Activated naive CD8-positive, alpha-beta T cell treated with anti-CD3 and anti-CD28 coated beads, Interleukin-2, amount 10 ng/mL, durations not matched to agents 7 days and 5 days (primary cell): ENCODE measurements at regions of chr19 and their contacts with region 1.

Region 1: DNA sequence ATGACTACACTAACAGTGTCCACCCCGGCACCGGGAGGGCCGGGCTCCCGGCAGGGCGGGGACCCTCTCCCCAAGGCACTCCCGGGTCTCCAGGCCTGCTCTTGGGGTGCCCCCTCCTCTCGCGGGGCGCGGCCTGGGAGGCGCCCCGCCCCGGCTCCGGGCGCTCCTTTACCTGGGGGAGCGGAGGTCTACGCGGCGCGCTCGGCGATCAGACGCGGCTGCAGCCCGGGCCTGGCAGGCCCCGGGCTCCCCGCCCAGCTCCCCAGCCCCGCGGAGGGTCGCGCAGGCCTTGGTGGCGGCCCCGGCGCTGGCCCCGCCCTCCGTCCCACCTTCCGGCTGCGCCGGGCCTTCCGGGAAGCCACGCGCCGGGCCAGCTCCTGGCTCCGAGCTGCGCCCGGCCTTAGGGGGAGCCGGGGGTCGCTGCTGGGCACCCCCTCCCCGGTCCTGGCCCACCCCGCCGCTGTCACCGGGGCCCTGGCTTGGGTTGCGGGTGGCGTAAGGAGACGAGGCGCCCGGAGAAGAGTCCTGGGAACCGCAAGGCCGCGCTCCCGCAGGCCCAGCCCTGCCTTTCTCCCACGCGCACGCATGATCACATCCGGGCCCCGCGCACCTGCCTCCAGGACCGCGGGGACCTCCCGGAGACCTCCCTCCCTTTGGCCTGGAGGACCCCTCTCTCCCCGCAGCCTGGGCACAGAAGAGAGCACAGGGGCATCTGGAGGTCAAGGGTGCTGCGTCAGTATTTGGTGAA is at the start of gene C19orf12:
- DNase-seq: peak; percentile 86
- ATAC-seq: peak; percentile 69
- H3K4me3 Mint-ChIP-seq: peak within 1 kb of the TSS; percentile 93
- H3K27ac Mint-ChIP-seq: peak within 1 kb of the TSS; percentile 98
- H3K4me1 Mint-ChIP-seq: peaks cover 47% of the 10 kb centered on the region
- H3K27me3 Mint-ChIP-seq: peaks cover under 1% of the 10 kb centered on the region
- total RNA-seq, gene C19orf12: 31.8 to 38.2 TPM

Region 2: GRCh38 chr19:29671393-29672160 is 43.5 kb before region 1 on chr19:
- POLR2A ChIA-PET with region 1: interaction called, 58 read pairs
- DNase-seq: peak; percentile 76
- ATAC-seq: peak; percentile 69
- H3K4me3 Mint-ChIP-seq: peak overlapping the region; percentile 78
- H3K27ac Mint-ChIP-seq: peak overlapping the region; percentile 94
- H3K4me1 Mint-ChIP-seq: peaks cover 70% of the 10 kb centered on the region
- H3K27me3 Mint-ChIP-seq: no peaks in the 10 kb centered on the region

Region 3: DNA sequence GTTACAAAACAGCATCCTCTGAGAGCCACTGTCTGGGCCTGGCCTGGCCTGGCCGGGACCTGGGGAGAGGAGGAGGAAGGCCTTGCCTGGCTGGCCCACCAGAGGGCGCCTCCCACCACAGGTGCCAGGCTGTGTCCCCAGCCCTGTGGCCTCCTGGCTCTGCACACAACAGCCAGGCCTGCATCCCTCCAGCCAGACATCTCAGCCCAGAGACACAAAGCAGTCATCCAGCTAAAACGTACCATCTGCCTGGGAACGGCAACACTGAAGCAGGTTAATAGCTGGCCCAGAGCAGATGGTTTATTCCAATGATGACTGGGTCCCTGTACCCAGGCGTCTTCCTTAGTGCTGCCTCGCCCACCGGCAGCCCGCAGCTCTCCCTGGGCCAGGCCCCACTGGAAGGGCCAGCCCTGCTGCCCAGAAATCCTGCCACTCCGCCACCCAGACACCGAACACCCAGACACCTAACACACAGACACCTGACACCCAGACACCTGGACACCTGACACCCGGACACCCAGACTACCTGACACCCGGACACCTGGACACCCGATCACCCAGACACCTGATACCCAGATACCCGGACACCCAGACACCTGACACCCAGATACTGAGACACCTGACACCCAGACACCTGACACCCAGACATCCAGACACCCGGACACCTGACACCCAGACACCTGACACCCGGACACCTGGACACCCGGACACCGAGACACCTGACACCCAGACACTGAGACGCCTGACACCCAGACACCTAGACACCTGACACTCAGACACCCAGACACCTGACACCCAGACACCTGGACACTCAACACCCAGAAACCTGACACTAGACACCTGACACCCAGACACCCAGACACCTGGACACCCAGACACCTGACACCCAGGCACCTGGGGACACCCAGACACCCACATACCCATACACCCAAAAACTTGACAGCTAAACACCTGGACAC is 20.2 kb before region 1 on chr19:
- POLR2A ChIA-PET with region 1: interaction called, 10 read pairs
- DNase-seq: peak; percentile 90
- ATAC-seq: peak; percentile 99
- H3K4me3 Mint-ChIP-seq: no peak overlapping the region
- H3K27ac Mint-ChIP-seq: peak overlapping the region; percentile 51
- H3K4me1 Mint-ChIP-seq: peaks cover 15% of the 10 kb centered on the region
- H3K27me3 Mint-ChIP-seq: no peaks in the 10 kb centered on the region

Region 4: GRCh38 chr19:29735800-29736199 is 20.7 kb after region 1 on chr19:
- POLR2A ChIA-PET with region 1: no interaction called
- DNase-seq: no peak
- ATAC-seq: no peak
- H3K4me3 Mint-ChIP-seq: no peak overlapping the region
- H3K27ac Mint-ChIP-seq: no peak overlapping the region
- H3K4me1 Mint-ChIP-seq: no peaks in the 10 kb centered on the region
- H3K27me3 Mint-ChIP-seq: peaks cover 2% of the 10 kb centered on the region

Region 5: DNA sequence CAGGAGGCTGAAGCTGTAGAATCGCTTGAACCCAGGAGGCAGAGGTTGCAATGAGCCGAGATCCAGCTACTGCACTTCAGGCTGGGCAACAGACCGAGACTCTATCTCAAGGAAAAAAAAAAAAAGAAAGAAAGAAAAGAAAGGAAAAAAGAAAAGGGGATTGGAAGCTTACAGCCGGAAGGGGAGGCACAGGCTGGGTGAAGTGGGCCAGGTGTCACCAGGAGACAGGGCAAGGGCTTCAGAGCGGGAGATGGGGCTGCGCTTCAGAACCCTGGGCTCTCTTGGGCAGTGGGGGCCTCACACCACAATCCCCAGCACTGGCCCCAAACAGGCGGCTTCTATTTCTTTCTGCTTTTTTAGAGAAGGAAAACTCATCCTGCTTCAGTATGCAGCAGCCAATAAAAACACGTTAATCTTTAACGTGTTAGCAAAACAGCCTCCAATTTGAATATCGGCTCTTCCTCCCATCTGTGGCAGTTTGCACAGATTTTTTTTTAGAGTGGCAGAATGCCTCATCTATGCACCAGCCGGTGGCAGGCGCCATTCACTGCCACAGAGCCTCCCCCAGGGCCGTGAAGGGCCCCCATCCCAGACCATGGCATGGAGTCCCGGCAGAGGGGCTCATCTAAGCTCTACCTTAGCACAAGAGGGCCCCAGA is 46.6 kb after region 1 on chr19:
- POLR2A ChIA-PET with region 1: no interaction called
- DNase-seq: no peak
- ATAC-seq: no peak
- H3K4me3 Mint-ChIP-seq: no peak overlapping the region
- H3K27ac Mint-ChIP-seq: no peak overlapping the region
- H3K4me1 Mint-ChIP-seq: peaks cover 3% of the 10 kb centered on the region
- H3K27me3 Mint-ChIP-seq: peaks cover 4% of the 10 kb centered on the region

Region 6: GRCh38 chr19:29785955-29786589 is 70.9 kb after region 1 on chr19:
- POLR2A ChIA-PET with region 1: no interaction called
- DNase-seq: no peak
- ATAC-seq: no peak
- H3K4me3 Mint-ChIP-seq: no peak overlapping the region
- H3K27ac Mint-ChIP-seq: no peak overlapping the region
- H3K4me1 Mint-ChIP-seq: no peaks in the 10 kb centered on the region
- H3K27me3 Mint-ChIP-seq: no peaks in the 10 kb centered on the region

Region 7: DNA sequence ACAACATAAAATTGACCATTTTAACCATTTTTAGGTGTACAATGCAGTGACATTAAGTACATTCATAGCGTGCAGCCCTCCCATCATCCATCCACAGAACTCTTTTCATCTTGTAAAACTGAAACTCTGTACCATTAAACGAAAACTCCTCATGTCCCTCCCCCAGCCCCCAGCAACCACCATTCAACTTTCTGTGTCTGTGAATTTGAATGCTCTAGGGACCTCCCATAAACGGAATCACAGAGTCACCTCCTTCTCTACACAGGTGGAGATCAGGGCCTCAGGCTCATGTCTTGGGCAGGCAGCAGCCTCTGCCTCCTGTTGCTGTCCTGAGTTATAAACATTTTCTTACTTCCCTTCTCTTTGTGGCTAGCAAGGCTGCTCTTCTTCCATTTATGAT is 89.4 kb after region 1 on chr19:
- POLR2A ChIA-PET with region 1: no interaction called
- DNase-seq: no peak
- ATAC-seq: peak; percentile 39
- H3K4me3 Mint-ChIP-seq: no peak overlapping the region
- H3K27ac Mint-ChIP-seq: no peak overlapping the region
- H3K4me1 Mint-ChIP-seq: peaks cover 3% of the 10 kb centered on the region
- H3K27me3 Mint-ChIP-seq: no peaks in the 10 kb centered on the region